H1 (cell line): ENCODE measurements at regions of chr6 and their contacts with region 1.

Region 1: DNA sequence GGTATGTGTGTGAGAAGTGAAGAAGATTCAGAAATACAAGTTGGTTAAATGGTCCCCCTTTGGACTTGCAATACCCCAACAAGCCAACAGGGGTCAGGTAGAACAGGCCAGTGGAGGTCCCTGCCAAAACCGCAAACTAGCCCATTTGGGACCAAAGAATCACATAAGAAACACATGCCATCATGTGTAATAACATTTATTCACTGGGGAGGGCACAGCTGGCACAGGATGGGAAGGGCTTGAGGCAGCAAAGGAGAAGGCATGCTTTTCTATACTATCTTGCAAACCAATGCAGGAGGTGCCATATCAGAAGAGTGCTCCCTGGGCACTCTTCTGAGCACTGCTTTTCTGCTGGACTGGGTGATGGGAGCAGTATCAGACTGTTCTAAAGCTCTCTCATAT is 116.1 kb upstream of the TRAF3IP2 start:
- DNase-seq: peak in 1 of 2 experiments; percentile 84
- H3K4me3 ChIP-seq: no peak overlapping the region
- H3K27ac ChIP-seq: no peak overlapping the region
- H3K4me1 ChIP-seq: no peaks in the 10 kb centered on the region; a peak in 1 of 7 replicates
- H3K27me3 ChIP-seq: no peaks in the 10 kb centered on the region
- CTCF ChIP-seq: peak; percentile 69 to 76 (median 69)
- EP300 ChIP-seq: no peak
- POLR2A ChIP-seq: no peak
- RAD21 ChIP-seq: peak; percentile 78 to 81

Region 2: GRCh38 chr6:111580826-111581505 is 140.8 kb before region 1 on chr6:
- CTCF ChIA-PET with region 1: no interaction called
- POLR2A ChIA-PET with region 1: no interaction called
- DNase-seq: no peak
- H3K4me3 ChIP-seq: no peak overlapping the region
- H3K27ac ChIP-seq: no peak overlapping the region
- H3K4me1 ChIP-seq: no peaks in the 10 kb centered on the region
- H3K27me3 ChIP-seq: no peaks in the 10 kb centered on the region
- CTCF ChIP-seq: peak; percentile 22 to 58 (median 58)
- EP300 ChIP-seq: no peak
- POLR2A ChIP-seq: no peak
- RAD21 ChIP-seq: peak; percentile 69 to 71

Region 3: GRCh38 chr6:111709615-111710398 is 11.9 kb before region 1 on chr6:
- CTCF ChIA-PET with region 1: interaction called, 27 read pairs
- POLR2A ChIA-PET with region 1: no interaction called
- DNase-seq: no peak
- H3K4me3 ChIP-seq: no peak overlapping the region
- H3K27ac ChIP-seq: no peak overlapping the region
- H3K4me1 ChIP-seq: peaks cover 0 to 6% (median 3%) of the 10 kb centered on the region in 4 experiments; a peak in 5 of 7 replicates
- H3K27me3 ChIP-seq: peaks cover 0 to 1% (median 0%) of the 10 kb centered on the region in 4 experiments; a peak in 1 of 7 replicates
- CTCF ChIP-seq: peak in 2 of 3 experiments; percentile 48 to 66; a peak in 3 of 4 replicates
- EP300 ChIP-seq: no peak
- POLR2A ChIP-seq: no peak
- RAD21 ChIP-seq: peak; percentile 85 to 86

Region 4: GRCh38 chr6:111753573-111753972 is 31.8 kb after region 1 on chr6:
- CTCF ChIA-PET with region 1: interaction called, 12 read pairs
- POLR2A ChIA-PET with region 1: no interaction called
- DNase-seq: no peak
- H3K4me3 ChIP-seq: no peak overlapping the region
- H3K27ac ChIP-seq: no peak overlapping the region
- H3K4me1 ChIP-seq: peaks cover 2 to 12% (median 7%) of the 10 kb centered on the region in 4 experiments; a peak in 5 of 7 replicates
- H3K27me3 ChIP-seq: no peaks in the 10 kb centered on the region
- CTCF ChIP-seq: no peak
- EP300 ChIP-seq: no peak
- POLR2A ChIP-seq: no peak
- RAD21 ChIP-seq: no peak

Region 5: DNA sequence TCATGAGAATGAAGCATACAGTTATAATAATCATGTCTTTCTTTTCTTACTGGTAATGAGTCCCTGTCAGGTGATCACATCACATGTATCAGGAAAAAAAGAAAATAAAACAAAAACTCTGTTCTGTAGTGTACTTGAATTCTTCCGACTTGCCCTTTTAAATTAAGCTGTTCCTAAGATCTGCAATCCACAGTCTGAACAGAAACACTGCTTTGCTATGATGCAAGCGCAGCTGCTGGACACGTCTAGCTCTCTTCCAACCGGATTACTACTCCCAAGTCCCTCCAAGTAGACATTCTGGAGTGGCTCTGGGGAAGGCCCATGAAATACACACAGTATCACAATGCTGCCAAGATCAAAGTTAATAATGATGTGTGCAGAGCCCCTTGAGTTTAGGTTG is 67.8 kb after region 1 on chr6:
- CTCF ChIA-PET with region 1: interaction called, 15 read pairs
- POLR2A ChIA-PET with region 1: no interaction called
- DNase-seq: no peak
- H3K4me3 ChIP-seq: no peak overlapping the region
- H3K27ac ChIP-seq: no peak overlapping the region
- H3K4me1 ChIP-seq: peaks cover 0 to 6% (median 3%) of the 10 kb centered on the region in 4 experiments; a peak in 2 of 7 replicates
- H3K27me3 ChIP-seq: no peaks in the 10 kb centered on the region
- CTCF ChIP-seq: no peak
- EP300 ChIP-seq: no peak
- POLR2A ChIP-seq: no peak
- RAD21 ChIP-seq: no peak

Region 6: DNA sequence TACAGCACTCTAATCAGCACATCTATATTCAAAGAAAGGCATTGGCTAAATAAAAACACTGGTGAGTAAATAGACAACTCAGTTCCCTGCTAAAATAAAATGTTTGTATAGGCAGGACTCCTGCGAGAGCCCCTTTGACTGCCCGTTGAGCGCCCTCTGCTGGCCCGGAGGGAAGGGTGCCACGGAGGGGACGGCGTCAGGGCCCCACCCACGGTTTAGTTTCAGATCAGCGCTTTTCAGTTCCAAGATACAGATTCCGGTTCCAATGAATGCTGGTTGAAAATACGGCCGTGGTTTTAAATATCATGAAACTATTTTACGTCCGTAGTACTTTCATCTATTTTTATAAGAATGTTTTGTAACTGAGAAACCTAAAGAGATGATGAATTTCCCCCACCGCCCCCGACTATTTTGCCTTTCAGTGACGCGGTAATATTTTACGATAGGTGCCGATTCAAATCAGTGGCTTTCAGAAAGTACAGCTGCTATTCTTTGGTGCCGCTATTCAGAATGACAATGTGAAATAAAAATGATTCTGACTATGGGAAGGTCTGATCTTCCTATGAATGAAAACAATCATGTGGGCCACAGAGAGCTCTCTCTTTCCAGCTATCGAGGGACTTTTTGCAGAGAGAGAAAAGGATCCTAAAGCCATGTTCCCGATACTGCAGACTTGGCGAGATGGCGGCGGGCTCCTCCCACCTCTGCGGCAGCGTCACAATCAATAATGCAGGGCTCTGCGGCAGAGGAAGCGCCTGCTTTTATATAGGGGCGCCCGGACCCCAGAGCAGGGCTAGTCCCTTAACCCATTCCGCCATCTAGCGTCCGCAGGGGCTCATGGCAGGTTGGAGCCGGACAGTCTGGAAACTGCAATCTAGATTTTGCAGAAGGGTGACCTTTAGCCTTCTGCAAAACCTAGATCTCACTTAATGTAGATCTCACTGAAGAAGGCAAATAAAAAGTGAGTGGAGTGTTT is 321.6 kb after region 1 on chr6:
- CTCF ChIA-PET with region 1: interaction called, 27 read pairs
- POLR2A ChIA-PET with region 1: no interaction called
- DNase-seq: peak; percentile 87 to 98
- H3K4me3 ChIP-seq: peak overlapping the region; percentile 45 to 78 (median 70)
- H3K27ac ChIP-seq: peak overlapping the region; percentile 16; the same call in 1 of the 2 replicates
- H3K4me1 ChIP-seq: no peaks in the 10 kb centered on the region
- H3K27me3 ChIP-seq: no peaks in the 10 kb centered on the region
- CTCF ChIP-seq: peak; percentile 92 to 96 (median 95)
- EP300 ChIP-seq: peak in 1 of 2 experiments; percentile 58; a peak in 1 of 3 replicates
- POLR2A ChIP-seq: peak; percentile 30 to 82
- RAD21 ChIP-seq: peak; percentile 98 to 99